Dendritic cell treated with granulocyte-macrophage colony-stimulating factor and Interleukin-4, amounts not matched to agents 40 ng/mL and 50 ng/mL, for 4 days (primary cell): ENCODE measurements at regions of chr6 and their contacts with region 1.

Region 1: DNA sequence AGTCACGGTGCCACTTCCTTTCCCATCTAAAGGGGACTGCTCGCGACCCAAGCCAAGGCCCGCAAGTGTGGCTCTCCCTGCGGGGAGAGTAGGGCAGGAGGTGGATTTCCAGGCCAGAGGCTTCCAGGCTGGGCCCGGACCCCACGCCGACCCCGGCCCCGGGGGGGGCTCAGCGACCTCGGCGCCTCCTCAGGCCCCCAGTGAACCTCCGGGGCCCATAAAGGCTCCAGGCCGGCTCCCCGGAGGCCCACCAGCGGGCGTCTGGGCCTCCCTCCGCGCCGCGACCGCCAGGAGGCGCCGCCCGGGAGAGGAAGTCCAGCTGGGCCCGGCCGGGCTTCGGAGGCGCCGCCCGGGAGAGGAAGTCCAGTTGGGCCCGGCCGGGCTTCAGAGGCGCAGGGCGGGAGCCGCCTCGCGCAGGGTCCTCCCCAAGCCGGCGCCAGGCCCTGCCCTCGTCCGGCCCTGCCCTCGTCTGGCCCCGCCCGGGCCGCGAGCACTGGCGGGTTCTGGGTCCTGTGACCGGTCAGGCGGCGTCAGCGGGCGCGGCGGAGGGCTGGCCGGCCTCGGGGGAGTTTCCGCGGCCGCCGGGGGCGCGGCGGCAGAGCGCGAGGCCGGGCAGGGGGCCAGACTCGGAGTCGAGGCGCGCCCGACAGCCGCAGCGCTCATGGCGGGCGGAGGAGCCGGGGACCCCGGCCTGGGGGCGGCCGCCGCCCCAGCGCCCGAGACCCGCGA is at the start of gene RAB32:
- H3K4me3 Mint-ChIP-seq: peak within 1 kb of the TSS; percentile 95
- H3K27ac Mint-ChIP-seq: peak within 1 kb of the TSS; percentile 94
- H3K4me1 Mint-ChIP-seq: peaks cover 30% of the 10 kb centered on the region
- H3K27me3 Mint-ChIP-seq: no peaks in the 10 kb centered on the region

Region 2: DNA sequence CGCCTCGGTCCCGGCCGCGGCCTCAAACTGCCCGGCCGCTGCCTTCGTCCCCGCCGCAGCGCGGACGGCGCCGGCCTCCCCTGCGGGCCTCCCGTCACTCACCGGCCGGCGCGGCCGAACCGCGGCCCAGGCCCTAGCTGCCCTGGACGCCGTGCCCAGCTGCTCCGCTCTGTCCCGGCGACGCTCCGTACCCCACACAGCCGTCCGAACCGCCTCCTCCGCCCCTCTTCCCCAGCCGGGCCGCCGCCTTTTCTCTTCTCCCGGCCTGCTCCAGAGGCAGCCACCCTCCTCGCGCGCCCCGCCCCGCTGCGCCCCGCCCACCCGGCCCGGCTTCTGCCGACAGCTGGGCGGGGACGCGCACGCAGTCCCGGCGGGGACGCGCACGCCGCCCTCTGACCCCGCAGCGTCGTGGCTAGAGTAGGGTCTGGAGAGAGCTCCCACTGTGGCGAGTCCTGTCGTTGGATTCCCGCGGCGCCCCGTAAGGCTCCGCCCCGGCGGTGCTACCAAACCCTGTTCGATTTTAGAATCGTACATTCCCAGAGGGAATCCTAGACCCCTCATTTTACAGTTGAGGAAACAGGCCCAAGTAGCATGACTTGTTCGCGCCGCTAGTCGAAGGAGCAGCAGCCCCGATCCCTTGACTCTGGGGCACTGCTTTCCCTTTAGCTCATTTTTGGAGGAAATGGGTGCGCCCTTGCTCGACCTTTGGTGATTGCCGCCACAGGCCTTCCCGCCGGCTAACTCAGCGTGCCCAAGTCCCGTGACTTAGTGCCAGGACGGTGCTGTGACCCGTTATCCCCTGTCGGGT is 728.7 kb before region 1 on chr6 and contains the start of gene FBXO30:
- intact Hi-C with region 1: loop called (anchors 5 kb)
- H3K4me3 Mint-ChIP-seq: peak within 1 kb of the TSS; percentile 88
- H3K27ac Mint-ChIP-seq: peak within 1 kb of the TSS; percentile 97
- H3K4me1 Mint-ChIP-seq: peaks cover 36% of the 10 kb centered on the region
- H3K27me3 Mint-ChIP-seq: no peaks in the 10 kb centered on the region

Region 3: DNA sequence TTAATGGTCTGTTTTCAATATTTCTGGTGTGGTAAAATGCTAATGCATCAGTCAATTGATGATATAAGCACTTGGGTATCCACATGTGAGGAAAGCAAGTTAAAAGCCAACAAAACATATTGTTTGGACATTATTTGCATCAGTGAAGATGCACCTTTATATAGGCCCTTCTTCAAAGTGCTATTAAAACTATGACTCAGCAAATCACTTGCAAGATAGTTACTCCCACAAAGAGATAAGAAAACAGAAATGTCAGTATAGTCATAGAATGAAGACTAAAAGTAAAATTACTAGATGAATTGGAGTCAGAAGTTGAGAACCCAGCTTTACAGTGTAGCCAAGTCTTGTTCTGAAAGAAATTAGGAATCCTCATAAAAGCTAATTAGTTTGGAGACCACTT is 529.1 kb before region 1 on chr6:
- intact Hi-C with region 1: no loop called
- H3K4me3 Mint-ChIP-seq: no peak overlapping the region
- H3K27ac Mint-ChIP-seq: no peak overlapping the region
- H3K4me1 Mint-ChIP-seq: no peaks in the 10 kb centered on the region
- H3K27me3 Mint-ChIP-seq: no peaks in the 10 kb centered on the region

Region 4: GRCh38 chr6:146289816-146290588 is 253.4 kb before region 1 on chr6:
- intact Hi-C with region 1: loop called (anchors 5 kb)
- H3K4me3 Mint-ChIP-seq: no peak overlapping the region
- H3K27ac Mint-ChIP-seq: peak overlapping the region; percentile 59
- H3K4me1 Mint-ChIP-seq: peaks cover 35% of the 10 kb centered on the region
- H3K27me3 Mint-ChIP-seq: no peaks in the 10 kb centered on the region

Region 5: GRCh38 chr6:146582885-146583284 is 39.5 kb after region 1 on chr6:
- intact Hi-C with region 1: loop called (anchors 5 kb)
- H3K4me3 Mint-ChIP-seq: no peak overlapping the region
- H3K27ac Mint-ChIP-seq: no peak overlapping the region
- H3K4me1 Mint-ChIP-seq: peaks cover 36% of the 10 kb centered on the region
- H3K27me3 Mint-ChIP-seq: no peaks in the 10 kb centered on the region

Region 6: DNA sequence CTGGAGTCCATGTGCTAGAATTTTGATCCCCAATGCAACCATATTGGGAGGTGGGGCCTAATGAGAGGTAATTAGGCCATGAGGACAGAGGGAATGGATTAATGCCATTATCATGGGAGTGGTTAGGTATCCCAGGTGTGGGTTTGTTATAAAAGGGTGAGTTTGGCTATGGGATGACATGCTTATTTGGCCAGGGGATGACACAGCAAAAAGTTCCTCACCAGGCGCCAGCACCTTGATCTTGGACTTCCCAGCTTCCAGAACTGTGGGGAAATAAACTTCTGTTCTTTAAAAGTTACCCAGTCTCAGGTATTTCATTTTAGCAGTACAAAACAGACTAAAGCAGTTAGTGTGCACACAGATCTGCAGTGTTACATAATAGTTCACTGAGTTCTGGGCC is 139.5 kb after region 1 on chr6:
- intact Hi-C with region 1: loop called (anchors 5 kb)
- H3K4me3 Mint-ChIP-seq: no peak overlapping the region
- H3K27ac Mint-ChIP-seq: no peak overlapping the region
- H3K4me1 Mint-ChIP-seq: peaks cover 6% of the 10 kb centered on the region
- H3K27me3 Mint-ChIP-seq: no peaks in the 10 kb centered on the region

Region 7: GRCh38 chr6:146857180-146857979 is 314.0 kb after region 1 on chr6:
- intact Hi-C with region 1: no loop called
- H3K4me3 Mint-ChIP-seq: peak overlapping the region; percentile 37
- H3K27ac Mint-ChIP-seq: peak overlapping the region; percentile 79
- H3K4me1 Mint-ChIP-seq: peaks cover 37% of the 10 kb centered on the region
- H3K27me3 Mint-ChIP-seq: no peaks in the 10 kb centered on the region